Naive thymus-derived CD4-positive, alpha-beta T cell (primary cell): ENCODE measurements at regions of chr20 and their contacts with region 1.

Region 1: DNA sequence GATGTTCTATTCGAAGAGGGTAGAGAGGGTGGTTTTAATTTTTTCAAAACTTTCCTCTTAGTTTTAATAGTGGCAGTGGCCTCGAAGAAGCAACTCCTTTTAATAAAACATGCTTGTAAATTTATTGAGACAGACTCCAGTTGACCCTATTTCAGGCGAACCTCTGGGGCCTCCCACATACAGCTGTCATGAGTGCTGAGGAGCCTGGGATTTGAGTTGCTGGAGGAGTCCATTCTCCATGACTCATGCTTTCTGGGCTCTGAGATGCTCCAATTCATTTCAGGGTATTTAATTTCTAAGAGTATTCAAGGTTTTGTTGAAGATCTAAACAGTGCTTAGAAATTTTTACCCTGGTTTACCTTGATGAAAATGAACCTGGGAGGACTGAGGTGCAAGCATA is 580.4 kb downstream of the CBLN4 start:
- DNase-seq: no peak
- ATAC-seq: no peak
- H3K4me3 ChIP-seq: no peak overlapping the region
- H3K4me3 Mint-ChIP-seq: no peak overlapping the region
- H3K27ac ChIP-seq: no peak overlapping the region
- H3K27ac Mint-ChIP-seq: no peak overlapping the region
- H3K4me1 ChIP-seq: no peaks in the 10 kb centered on the region
- H3K4me1 Mint-ChIP-seq: no peaks in the 10 kb centered on the region
- H3K27me3 ChIP-seq: no peaks in the 10 kb centered on the region
- H3K27me3 Mint-ChIP-seq: peaks cover 0 to 13% (median 0%) of the 10 kb centered on the region in 5 donors

Region 2: DNA sequence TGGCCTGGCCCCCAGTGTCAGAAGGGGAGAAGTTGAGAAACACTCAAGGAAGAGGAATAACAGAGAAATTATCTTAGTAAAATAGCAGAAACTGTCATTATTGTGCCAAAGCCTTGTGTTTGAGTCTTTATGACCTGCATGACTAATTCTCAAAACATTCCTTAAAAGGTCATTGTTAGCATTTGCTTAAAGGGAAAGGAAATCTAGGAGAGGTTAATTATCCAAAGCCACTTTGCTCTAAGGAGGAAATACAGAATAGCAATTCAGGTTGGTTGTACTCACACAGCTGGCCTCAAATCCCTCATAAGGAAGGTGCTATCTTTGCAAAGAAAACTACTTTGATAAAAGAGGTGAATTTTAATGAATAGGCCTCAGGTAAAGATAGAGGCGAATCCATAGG is 63.6 kb after region 1 on chr20:
- CTCF ChIA-PET with region 1: no interaction called
- POLR2A ChIA-PET with region 1: no interaction called
- intact Hi-C with region 1: loop called in 1 of 2 experiments (anchors 10 kb)
- DNase-seq: no peak
- ATAC-seq: no peak
- H3K4me3 ChIP-seq: no peak overlapping the region
- H3K4me3 Mint-ChIP-seq: no peak overlapping the region
- H3K27ac ChIP-seq: no peak overlapping the region
- H3K27ac Mint-ChIP-seq: no peak overlapping the region
- H3K4me1 ChIP-seq: no peaks in the 10 kb centered on the region
- H3K4me1 Mint-ChIP-seq: no peaks in the 10 kb centered on the region
- H3K27me3 ChIP-seq: no peaks in the 10 kb centered on the region
- H3K27me3 Mint-ChIP-seq: no peaks in the 10 kb centered on the region

Region 3: DNA sequence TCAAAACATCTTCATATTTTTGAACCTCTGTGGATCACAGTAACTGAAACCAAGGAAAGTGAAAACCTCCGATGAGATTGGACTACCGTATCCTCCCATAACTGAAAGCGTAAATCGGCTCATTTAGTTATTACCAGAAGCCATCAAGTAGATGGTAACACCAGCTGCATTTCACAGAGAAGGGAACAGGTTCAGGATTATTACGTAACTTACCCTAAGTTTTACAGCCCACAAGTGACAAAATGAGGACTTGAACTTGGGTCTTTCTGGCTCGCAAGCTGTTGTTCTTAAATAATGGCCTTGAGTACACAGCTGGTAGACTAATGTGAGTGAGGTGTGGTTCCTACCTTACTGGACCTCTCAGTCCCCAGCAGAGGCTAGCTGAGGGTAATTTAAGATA is 618.3 kb after region 1 on chr20:
- CTCF ChIA-PET with region 1: no interaction called
- POLR2A ChIA-PET with region 1: no interaction called
- intact Hi-C with region 1: no loop called
- DNase-seq: no peak
- ATAC-seq: no peak
- H3K4me3 ChIP-seq: no peak overlapping the region
- H3K4me3 Mint-ChIP-seq: no peak overlapping the region
- H3K27ac ChIP-seq: no peak overlapping the region
- H3K27ac Mint-ChIP-seq: no peak overlapping the region
- H3K4me1 ChIP-seq: no peaks in the 10 kb centered on the region
- H3K4me1 Mint-ChIP-seq: no peaks in the 10 kb centered on the region
- H3K27me3 ChIP-seq: no peaks in the 10 kb centered on the region
- H3K27me3 Mint-ChIP-seq: peaks cover 0 to 8% (median 0%) of the 10 kb centered on the region in 5 donors